ENCODE measurements at regions of chr13 and their contacts with region 1.

Region 1: GRCh38 chr13:99436686-99437416 is 64.4 kb upstream of the TM9SF2 start:
- DNase-seq: peak; percentile 72
- H3K4me3 ChIP-seq: no peak overlapping the region
- H3K27ac ChIP-seq: no peak overlapping the region
- H3K27me3 ChIP-seq: peaks cover 18% of the 10 kb centered on the region
- CTCF ChIP-seq: peak; percentile 100

Region 2: GRCh38 chr13:99093997-99094396 is 342.9 kb before region 1 on chr13:
- CTCF ChIA-PET with region 1: no interaction called
- POLR2A ChIA-PET with region 1: no interaction called
- DNase-seq: no peak
- H3K4me3 ChIP-seq: no peak overlapping the region
- H3K27ac ChIP-seq: no peak overlapping the region
- H3K27me3 ChIP-seq: peaks cover 11% of the 10 kb centered on the region
- CTCF ChIP-seq: no peak

Region 3: GRCh38 chr13:99231721-99232120 is 205.1 kb before region 1 on chr13:
- CTCF ChIA-PET with region 1: interaction called, 15 read pairs
- POLR2A ChIA-PET with region 1: no interaction called
- DNase-seq: no peak
- H3K4me3 ChIP-seq: no peak overlapping the region
- H3K27ac ChIP-seq: no peak overlapping the region
- H3K27me3 ChIP-seq: no peaks in the 10 kb centered on the region
- CTCF ChIP-seq: no peak

Region 4: DNA sequence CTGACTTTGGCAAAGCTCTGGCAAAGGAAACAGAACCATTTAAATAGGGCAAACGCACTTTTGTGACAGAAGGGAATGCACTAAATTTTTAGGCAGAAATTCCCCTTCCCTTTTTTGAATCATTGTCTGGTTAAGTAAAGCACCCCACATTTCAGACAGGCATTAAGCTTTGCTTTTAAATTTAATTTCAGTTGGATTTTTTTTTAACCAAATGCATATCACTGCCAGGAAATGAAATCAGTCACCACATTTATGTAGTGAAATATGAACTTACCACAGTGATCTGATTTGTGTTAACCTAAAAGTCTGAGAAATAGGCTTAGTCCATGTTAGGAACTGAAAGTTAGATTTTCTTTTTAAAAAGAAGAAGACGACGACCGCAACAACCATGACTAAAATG is 140.5 kb before region 1 on chr13:
- CTCF ChIA-PET with region 1: interaction called, 21 read pairs
- POLR2A ChIA-PET with region 1: no interaction called
- DNase-seq: no peak
- H3K4me3 ChIP-seq: no peak overlapping the region
- H3K27ac ChIP-seq: no peak overlapping the region
- H3K27me3 ChIP-seq: no peaks in the 10 kb centered on the region
- CTCF ChIP-seq: no peak

Region 5: DNA sequence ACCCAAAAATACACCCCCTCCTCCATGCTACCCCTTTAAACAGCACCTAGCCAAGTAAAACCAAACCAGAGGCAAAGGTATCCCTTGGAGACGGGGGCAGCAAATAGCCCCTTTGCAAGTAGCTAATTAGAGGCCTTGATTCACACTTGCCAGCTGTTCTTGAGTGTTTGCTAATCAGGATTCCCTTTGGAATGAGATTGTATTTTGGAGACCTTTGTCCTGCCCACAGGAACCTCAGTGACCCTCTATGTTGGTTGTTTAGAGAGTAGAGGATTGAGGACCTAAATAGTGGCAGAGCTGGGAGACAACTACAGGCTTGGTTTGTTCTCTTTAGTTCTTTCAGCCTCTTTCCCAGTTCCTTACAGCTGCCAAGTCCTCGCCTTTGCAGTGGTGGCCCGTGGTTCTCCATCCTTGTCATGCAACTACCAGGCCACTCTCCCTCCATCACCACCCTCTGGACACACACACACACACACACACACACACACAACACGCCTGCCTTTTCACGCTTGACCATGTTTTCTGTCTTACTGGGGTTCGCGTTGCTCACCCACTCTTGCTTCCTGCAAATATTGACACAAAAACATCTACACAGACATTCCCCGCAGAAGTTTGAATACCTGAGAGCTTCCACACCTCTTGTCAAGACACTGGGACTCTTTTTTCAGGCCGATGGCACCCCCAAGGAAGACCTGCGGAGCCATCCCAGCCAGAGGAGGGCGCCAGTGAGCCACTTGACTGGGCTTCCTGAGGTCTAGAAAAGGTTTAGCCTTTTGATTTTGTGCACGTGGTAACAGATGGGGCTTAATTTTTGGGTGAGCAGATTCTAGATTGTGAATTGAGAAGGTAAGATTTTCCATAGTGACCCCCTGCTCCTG is 49.7 kb before region 1 on chr13:
- CTCF ChIA-PET with region 1: interaction called, 10 read pairs
- POLR2A ChIA-PET with region 1: no interaction called
- DNase-seq: no peak
- H3K4me3 ChIP-seq: no peak overlapping the region
- H3K27ac ChIP-seq: no peak overlapping the region
- H3K27me3 ChIP-seq: no peaks in the 10 kb centered on the region
- CTCF ChIP-seq: peak; percentile 52

Region 6: DNA sequence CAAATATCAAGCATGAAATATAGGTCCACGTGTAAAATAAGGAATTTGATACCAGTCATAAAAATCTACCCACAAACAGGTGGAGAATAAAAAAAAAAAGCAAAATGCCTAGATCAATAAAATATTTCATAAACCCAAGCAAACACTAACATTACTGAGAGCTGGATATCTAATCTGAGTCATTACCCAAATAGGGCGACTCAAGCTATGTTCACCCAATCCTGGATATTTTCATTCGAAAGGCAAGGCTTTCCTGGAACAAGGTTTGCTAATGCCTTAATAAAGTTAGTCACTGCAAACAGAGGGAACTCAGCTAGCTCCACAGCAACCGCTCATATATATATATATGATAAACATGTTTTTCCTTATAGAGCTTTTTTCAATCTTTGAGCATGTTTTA is 30.9 kb after region 1 on chr13:
- CTCF ChIA-PET with region 1: interaction called, 15 read pairs
- POLR2A ChIA-PET with region 1: no interaction called
- DNase-seq: no peak
- H3K4me3 ChIP-seq: no peak overlapping the region
- H3K27ac ChIP-seq: no peak overlapping the region
- H3K27me3 ChIP-seq: no peaks in the 10 kb centered on the region
- CTCF ChIP-seq: no peak

Region 7: DNA sequence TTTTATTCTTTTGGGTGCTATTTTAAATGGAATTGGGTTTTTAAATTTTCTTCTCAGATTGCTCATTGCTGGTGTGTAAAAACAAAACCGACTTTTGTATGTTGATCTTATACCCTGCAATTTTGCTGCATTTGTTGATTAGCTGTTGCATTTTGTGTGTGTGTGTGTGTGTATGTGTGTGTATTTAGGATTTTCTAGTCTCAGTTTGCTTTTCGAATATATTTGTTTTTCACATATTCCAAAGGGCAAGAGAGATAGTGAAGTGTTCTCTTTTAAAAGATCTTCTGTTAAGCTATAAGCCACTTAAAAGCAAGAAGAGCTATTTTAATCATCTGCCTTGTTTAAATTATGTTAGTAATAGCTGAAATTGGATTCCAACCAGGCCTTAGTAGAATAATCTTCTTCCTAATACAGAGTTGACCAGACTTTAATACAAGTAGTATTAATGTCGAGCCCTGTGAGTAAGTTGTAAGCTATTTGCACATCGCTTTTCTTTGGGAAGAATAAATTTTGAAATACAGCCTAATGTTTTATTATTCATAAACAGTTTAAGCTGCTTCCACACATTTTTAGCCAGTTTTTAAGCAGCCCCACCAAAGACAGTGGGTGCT is 121.8 kb after region 1 on chr13:
- CTCF ChIA-PET with region 1: interaction called, 14 read pairs
- POLR2A ChIA-PET with region 1: no interaction called
- DNase-seq: no peak
- H3K4me3 ChIP-seq: no peak overlapping the region
- H3K27ac ChIP-seq: no peak overlapping the region
- H3K27me3 ChIP-seq: no peaks in the 10 kb centered on the region
- CTCF ChIP-seq: no peak